ENCODE measurements at regions of chr15 and their contacts with region 1.

Region 1: DNA sequence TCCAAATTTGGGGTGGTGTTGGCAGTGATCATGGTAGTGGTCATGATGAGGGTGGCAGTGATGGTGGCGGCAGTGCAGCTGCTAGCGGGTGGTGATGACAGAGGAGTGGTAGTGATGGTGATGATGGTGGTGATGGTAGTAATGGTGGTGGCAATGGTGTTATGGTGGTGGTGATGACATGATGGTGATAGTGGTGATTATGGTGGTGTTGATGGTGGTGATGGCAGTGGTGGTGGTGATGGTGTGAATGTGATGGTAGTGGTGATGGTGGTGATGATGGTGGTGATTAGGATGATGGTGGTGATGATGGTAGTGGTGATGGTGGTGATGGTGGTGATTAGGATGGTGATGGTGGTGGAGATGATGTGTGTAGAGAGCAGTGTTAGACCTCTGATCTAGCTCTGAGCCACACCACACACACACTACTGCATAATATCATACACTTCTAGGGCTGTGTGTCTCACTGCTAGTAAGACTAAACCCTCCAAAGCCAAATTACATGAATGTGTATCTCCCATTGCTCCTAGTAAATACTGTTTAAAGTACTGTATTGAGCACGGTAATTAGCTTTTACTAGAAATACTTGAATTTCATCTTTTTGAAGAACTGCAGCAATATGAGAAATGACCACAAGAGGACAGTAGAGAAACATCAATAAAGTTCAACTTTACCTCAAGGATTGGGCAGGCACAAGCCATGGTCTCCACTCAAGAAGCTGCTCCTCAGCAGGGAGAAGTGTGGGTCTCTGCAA is 28.8 kb downstream of the TMED3 start:
- DNase-seq: peak; percentile 31
- H3K4me3 Mint-ChIP-seq: no peak overlapping the region
- H3K27ac Mint-ChIP-seq: no peak overlapping the region
- H3K4me1 Mint-ChIP-seq: no peaks in the 10 kb centered on the region
- H3K27me3 Mint-ChIP-seq: no peaks in the 10 kb centered on the region

Region 2: GRCh38 chr15:79265987-79266579 is 73.7 kb before region 1 on chr15:
- CTCF ChIA-PET with region 1: no interaction called
- DNase-seq: no peak
- H3K4me3 Mint-ChIP-seq: no peak overlapping the region
- H3K27ac Mint-ChIP-seq: no peak overlapping the region
- H3K4me1 Mint-ChIP-seq: no peaks in the 10 kb centered on the region
- H3K27me3 Mint-ChIP-seq: peaks cover 16% of the 10 kb centered on the region

Region 3: DNA sequence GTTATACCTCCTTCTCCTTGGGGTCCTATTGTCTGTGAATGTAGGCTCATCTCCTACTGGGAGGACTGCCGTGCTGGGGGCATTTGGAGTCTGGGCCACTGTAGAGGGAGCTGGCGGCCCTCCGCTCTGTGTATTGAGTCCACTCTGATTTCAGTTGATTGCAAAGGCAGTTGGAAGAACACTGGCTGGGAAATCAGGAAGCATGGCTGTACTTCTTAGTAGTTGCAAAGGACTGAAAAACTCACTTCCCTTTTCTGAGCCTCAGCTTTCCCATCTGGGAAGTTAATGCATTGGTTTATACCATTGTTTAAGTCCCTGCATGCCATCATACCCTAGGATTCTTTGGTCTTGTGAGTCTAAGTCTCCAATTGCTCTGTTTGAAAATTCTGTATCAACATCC is 17.8 kb after region 1 on chr15:
- CTCF ChIA-PET with region 1: interaction called, 11 read pairs
- DNase-seq: no peak
- H3K4me3 Mint-ChIP-seq: no peak overlapping the region
- H3K27ac Mint-ChIP-seq: no peak overlapping the region
- H3K4me1 Mint-ChIP-seq: no peaks in the 10 kb centered on the region
- H3K27me3 Mint-ChIP-seq: no peaks in the 10 kb centered on the region

Region 4: GRCh38 chr15:79596051-79596507 is 256.3 kb after region 1 on chr15:
- CTCF ChIA-PET with region 1: interaction called, 38 read pairs
- DNase-seq: peak; percentile 72
- H3K4me3 Mint-ChIP-seq: no peak overlapping the region
- H3K27ac Mint-ChIP-seq: no peak overlapping the region
- H3K4me1 Mint-ChIP-seq: no peaks in the 10 kb centered on the region
- H3K27me3 Mint-ChIP-seq: peaks cover 10% of the 10 kb centered on the region

Region 5: GRCh38 chr15:79853458-79854328 is 514.0 kb after region 1 on chr15:
- CTCF ChIA-PET with region 1: interaction called, 10 read pairs
- DNase-seq: peak; percentile 70
- H3K4me3 Mint-ChIP-seq: no peak overlapping the region
- H3K27ac Mint-ChIP-seq: no peak overlapping the region
- H3K4me1 Mint-ChIP-seq: peaks cover 12% of the 10 kb centered on the region
- H3K27me3 Mint-ChIP-seq: no peaks in the 10 kb centered on the region